Body of pancreas (tissue), 4 donors: ENCODE measurements at regions of chr2 and their contacts with region 1.

Region 1: GRCh38 chr2:132542953-132543569 is 126.5 kb downstream of the GPR39 start:
- DNase-seq: no peak
- ATAC-seq: no peak
- H3K4me3 ChIP-seq: no peak overlapping the region
- H3K27ac ChIP-seq: no peak overlapping the region
- H3K4me1 ChIP-seq: no peaks in the 10 kb centered on the region
- H3K27me3 ChIP-seq: no peaks in the 10 kb centered on the region
- CTCF ChIP-seq: no peak
- POLR2A ChIP-seq: no peak

Region 2: DNA sequence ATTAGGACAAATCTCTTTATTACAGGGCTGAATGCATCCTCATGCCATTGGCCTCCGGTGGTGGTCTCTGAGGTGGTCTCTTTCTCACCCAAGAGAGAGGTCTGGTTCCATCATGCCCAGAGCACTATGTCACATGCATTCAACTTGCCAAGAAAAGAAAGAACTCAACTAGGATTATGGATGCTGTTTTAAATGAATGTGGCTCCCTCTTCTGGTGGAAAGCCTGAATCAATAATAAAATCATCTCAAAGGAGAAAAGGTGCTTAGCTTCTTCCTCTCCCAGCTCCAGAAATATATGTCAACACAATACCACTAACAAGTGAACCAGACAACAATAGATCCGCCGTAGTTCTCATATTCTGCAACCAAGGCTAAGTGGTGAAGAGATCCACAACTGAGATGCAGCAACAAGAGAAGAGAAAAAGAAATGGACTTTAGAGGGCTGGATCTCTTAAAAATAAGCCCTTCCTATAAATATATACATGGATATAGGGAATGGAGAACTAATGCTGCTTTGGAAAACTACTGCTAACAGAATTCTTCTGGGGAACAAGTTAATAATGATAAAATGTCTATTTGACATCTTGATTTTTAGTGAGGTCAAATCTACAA is 628.4 kb after region 1 on chr2:
- intact Hi-C with region 1: loop called (anchors 5 kb)
- DNase-seq: peak in 2 of 4 donors; percentile 11 to 27
- ATAC-seq: peak; percentile 71
- H3K4me3 ChIP-seq: no peak overlapping the region
- H3K27ac ChIP-seq: no peak overlapping the region
- H3K4me1 ChIP-seq: no peaks in the 10 kb centered on the region
- H3K27me3 ChIP-seq: no peaks in the 10 kb centered on the region
- CTCF ChIP-seq: peak; percentile 19 to 83 (median 76)
- POLR2A ChIP-seq: no peak